RWPE1 (cell line): ENCODE measurements at regions of chr17 and their contacts with region 1.

Region 1: DNA sequence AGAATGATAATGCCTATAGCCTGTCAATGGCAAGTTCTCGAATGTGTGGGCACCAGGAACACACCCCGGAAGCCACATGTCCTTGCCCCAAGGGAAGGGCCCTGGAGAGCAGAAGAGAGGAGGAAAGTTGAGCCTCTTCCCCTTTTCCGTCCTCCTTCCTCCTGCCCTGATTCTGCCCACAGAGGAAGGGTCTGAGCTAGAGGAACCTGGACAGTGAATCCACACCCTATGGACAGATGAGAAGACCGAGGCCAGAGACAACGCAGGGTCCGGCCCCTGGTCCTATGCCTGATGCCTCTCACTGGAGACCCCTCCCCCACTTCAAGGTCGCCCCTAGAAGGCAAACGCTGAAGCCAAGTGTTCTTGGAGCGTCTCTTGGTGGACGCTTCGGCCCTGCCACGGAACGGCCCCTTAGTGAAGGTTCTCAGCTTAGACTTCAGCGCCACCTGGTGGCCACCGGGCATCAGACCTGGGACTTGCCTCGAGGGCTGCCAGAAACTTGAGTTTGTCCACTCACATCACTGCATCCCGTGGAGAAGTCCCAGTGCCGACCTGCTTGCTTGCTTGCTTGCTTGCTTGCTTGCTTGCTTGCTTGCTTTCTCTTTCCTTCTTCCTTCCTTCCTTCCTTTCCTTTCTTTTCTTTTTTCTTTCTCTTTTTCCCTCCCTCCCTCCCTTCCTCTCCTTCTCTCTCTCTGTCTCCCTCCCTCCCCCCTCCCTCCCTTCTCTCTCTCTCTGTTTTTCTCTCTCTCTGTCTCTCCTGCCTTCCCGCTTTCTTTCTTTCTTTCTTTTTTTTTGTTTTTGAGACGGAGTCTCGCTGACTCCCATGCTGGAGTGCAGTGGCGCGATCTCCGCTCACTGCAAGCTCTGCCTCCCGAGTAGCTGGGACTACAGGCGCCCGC is 20.6 kb upstream of the SPNS3 start:
- DNase-seq: peak; percentile 79
- H3K27ac ChIP-seq: no peak overlapping the region
- CTCF ChIP-seq: peak; percentile 83

Region 2: DNA sequence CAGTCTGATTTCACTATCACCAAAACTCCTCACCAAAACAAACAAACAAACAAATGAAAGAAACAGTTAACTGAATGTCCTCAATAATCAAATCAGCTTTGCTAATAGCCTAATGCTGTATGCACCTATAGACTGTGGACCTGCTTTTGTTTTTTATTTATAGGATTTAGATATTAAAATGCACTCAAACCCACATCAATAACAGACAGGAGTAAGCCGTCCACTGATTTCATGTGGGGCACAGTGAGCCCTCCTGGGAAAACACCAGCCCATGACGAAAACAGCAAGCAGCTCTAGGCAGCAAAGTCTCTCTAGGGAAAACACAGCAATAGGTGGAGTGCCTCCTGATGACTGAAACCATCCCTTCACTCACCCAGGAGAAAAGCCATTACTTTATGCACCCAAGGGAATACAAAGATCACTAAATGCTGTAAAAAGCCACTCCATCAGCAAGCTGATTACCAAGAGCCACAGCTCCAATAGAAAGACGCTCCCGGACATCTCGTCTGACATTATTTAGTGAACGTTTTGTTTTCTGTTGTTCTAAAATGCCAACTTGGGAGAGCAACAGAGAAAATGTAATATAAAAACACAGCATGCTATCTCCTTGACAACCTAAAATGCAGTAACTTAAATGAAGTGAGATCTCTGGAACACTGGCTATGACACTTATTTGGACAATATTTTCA is 197.2 kb before region 1 on chr17:
- CTCF ChIA-PET with region 1: interaction called, 12 read pairs
- POLR2A ChIA-PET with region 1: no interaction called
- DNase-seq: no peak
- H3K27ac ChIP-seq: no peak overlapping the region
- CTCF ChIP-seq: no peak

Region 3: DNA sequence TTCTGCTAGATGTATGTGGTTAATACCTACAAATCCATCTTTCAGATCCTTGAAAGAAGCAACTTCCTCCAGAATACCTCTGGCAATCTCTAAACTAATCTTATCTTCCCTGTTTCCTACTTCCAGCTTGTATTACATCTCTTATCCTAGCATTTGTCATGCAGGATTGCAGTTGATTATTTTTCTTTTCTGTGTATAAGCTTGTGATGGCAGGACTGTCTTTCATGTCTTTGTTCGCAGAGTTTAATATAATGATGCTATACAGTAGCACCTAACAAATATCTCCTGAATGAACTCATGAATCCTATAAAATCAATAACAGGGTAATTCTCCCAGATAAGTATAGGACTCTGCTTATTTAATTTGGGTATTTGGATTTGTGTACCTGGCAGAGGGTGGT is 34.6 kb before region 1 on chr17:
- CTCF ChIA-PET with region 1: no interaction called
- POLR2A ChIA-PET with region 1: no interaction called
- DNase-seq: no peak
- H3K27ac ChIP-seq: no peak overlapping the region
- CTCF ChIP-seq: no peak

Region 4: DNA sequence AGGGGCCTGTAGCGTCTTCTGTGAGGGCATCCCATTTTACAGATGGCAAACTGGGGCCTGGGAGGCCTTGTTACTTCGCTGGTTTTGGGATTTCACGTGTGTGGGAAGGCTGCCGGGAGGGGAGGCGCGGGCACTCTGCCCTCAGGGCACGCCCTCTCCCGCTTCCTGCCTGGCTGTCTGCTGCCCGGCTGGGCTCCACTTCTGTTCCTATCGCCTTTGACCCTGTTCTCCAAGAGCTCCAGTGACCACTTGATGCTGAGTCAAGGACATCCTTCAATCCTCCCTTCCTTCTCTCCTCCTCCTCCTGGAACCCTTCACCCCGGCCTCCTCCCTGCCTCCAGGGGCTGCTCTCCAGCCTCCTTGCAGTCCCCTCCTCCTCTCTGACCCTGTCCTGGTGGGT is 36.6 kb after region 1 on chr17:
- CTCF ChIA-PET with region 1: no interaction called
- POLR2A ChIA-PET with region 1: no interaction called
- DNase-seq: no peak
- H3K27ac ChIP-seq: no peak overlapping the region
- CTCF ChIP-seq: no peak

Region 5: GRCh38 chr17:4573669-4574068 is 160.5 kb after region 1 on chr17:
- CTCF ChIA-PET with region 1: no interaction called
- POLR2A ChIA-PET with region 1: no interaction called
- DNase-seq: no peak
- H3K27ac ChIP-seq: no peak overlapping the region
- CTCF ChIP-seq: no peak

Region 6: GRCh38 chr17:4994081-4994595 is 581.0 kb after region 1 on chr17:
- CTCF ChIA-PET with region 1: no interaction called
- POLR2A ChIA-PET with region 1: interaction called, 11 read pairs
- DNase-seq: no peak
- H3K27ac ChIP-seq: no peak overlapping the region
- CTCF ChIP-seq: no peak